AG04450 (cell line): ENCODE measurements at regions of chr12 and their contacts with region 1.

Region 1: GRCh38 chr12:93419388-93420034 is 22.2 kb downstream of the UBE2N start:
- DNase-seq: no peak
- H3K4me3 ChIP-seq: no peak overlapping the region
- H3K27ac ChIP-seq: no peak overlapping the region
- H3K27me3 ChIP-seq: no peaks in the 10 kb centered on the region
- CTCF ChIP-seq: peak; percentile 61

Region 2: DNA sequence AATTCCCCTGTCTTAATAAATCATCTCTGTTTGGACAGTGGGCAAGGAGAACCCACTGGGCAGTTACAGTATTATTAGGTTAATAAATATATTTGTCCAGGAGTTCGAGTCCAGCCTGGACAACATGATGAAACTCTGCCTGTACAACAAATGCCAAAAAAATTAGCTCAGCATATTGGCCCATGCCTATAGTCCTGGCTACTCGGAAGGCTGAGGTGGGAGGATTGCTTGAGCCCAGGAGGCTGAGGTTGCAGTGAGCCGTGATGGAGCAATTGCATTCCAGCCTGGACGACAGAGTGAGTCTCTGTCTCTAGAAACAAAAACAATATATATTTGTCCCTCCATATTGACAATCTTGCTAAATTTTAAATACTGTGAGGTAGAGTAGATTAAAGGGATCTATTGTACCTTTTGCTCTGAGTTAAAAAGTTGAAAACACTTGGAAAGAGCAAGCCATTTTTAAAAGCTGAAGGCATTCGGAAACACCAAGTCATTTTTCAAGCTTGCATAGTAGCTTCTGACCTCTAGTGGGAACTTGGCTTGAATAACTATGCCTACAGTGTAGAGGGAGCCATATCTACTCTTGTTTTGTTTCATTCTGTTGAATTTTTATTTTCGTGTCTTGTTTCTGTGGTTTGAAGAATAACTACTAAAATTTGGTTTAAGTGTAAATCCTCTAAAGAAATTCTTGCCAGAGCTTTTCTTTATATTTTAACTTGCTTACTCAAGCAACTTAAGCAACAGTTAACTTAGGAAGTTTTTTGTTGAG is 475.8 kb before region 1 on chr12:
- CTCF ChIA-PET with region 1: interaction called, 10 read pairs
- POLR2A ChIA-PET with region 1: no interaction called
- DNase-seq: no peak
- H3K4me3 ChIP-seq: no peak overlapping the region
- H3K27ac ChIP-seq: no peak overlapping the region
- H3K27me3 ChIP-seq: no peaks in the 10 kb centered on the region
- CTCF ChIP-seq: no peak; the same call in 1 of the 2 replicates

Region 3: DNA sequence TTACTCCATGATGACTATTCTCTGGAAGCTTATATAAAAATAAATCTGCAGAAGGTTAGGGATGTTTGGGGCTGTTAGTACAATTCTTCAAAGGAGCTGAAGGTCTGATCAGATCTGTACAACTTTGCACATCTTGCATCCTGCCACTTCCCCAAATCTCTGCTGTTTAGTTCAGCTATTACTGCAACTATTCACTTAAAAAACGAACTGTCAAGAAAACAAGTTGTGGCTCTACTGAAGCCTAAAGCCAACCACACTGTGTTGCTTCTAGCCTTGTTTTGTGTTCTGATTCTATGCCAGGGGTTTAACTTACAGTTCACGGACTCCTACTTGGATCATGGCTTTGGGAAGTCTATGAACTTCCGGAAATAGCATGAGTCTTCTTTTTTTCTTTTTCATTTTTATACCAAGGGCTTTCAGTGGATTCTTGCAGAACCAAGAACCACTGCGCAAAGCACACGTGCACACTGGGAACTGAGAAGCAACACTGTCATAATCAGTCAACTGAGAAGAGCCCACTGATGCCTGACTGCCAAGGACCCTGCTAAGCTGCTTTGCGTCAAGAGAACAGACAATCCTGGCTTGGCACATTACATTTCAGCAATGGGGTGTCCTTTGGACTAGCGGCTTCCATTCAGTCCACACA is 424.1 kb before region 1 on chr12:
- CTCF ChIA-PET with region 1: interaction called, 131 read pairs
- POLR2A ChIA-PET with region 1: no interaction called
- DNase-seq: no peak
- H3K4me3 ChIP-seq: no peak overlapping the region
- H3K27ac ChIP-seq: no peak overlapping the region
- H3K27me3 ChIP-seq: no peaks in the 10 kb centered on the region
- CTCF ChIP-seq: no peak

Region 4: DNA sequence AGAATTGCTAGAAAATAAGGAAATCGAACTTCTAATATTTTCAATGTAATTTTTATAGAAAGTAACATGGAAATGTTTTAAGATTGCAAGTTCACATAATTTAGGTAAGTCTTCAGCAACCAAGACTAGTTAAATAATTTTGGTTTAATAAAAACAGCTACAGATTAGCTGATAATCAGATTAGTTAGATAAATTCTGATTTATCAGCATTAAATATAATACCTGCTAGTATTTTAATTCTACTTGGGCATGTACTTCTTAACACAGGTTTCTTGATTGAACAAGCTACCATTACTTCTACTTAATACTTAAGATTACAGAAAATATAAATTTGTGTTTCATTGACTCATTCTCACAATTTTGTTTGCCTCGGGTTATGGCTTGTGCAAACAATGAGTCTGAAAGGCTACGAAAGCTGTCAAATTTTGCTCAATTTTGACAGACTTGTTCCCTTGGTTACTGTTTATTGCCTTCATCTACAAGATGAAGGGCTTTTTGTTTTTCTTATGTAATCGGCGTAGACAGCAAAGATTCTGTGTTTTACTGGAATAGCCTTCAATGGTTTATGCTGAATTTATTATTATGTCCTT is 157.9 kb before region 1 on chr12:
- CTCF ChIA-PET with region 1: no interaction called
- POLR2A ChIA-PET with region 1: no interaction called
- DNase-seq: no peak
- H3K4me3 ChIP-seq: no peak overlapping the region
- H3K27ac ChIP-seq: no peak overlapping the region
- H3K27me3 ChIP-seq: no peaks in the 10 kb centered on the region
- CTCF ChIP-seq: no peak

Region 5: DNA sequence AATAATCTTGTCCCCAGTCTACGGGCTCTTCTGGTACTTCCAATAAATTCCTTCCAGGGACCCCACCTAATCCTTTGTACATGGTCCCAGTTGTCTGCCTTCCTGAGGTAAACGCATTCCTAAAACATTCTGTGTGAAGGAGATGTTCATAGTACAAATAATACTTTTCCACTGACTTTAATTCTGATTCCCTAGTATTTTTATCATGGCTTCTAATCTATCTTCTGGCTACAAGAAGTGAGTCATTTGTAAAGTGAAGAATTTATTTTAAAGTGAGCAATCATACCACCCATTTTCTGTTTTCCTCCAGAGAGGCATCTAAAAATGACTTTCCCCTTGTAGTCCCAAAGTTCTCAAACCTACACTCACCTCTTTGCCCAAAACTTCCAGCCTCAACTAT is 107.7 kb before region 1 on chr12:
- CTCF ChIA-PET with region 1: no interaction called
- POLR2A ChIA-PET with region 1: no interaction called
- DNase-seq: no peak
- H3K4me3 ChIP-seq: no peak overlapping the region
- H3K27ac ChIP-seq: no peak overlapping the region
- H3K27me3 ChIP-seq: no peaks in the 10 kb centered on the region
- CTCF ChIP-seq: no peak

Region 6: DNA sequence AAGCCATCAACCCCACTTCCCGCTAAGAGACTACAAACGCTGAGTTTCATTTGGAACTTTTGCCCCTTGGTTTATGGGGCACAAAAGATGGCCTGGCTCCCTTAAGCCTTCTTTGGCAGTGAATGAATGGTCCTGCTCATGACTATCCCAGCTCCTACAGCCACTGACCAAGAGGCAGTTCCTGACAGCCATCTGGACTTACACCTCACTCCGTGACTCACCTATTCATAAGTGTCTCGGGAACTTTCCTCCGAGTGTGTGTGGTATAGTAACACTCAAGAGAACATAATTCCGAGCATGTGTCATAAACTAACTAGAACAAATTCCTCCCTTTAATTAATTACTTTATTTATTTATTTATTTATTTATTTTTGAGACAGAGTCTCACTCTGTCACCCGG is 93.7 kb before region 1 on chr12:
- CTCF ChIA-PET with region 1: no interaction called
- POLR2A ChIA-PET with region 1: no interaction called
- DNase-seq: no peak
- H3K4me3 ChIP-seq: no peak overlapping the region
- H3K27ac ChIP-seq: no peak overlapping the region
- H3K27me3 ChIP-seq: no peaks in the 10 kb centered on the region
- CTCF ChIP-seq: no peak

Region 7: GRCh38 chr12:93397412-93397811 is 22.1 kb before region 1 on chr12:
- CTCF ChIA-PET with region 1: interaction called, 25 read pairs
- POLR2A ChIA-PET with region 1: no interaction called
- DNase-seq: no peak
- H3K4me3 ChIP-seq: no peak overlapping the region
- H3K27ac ChIP-seq: no peak overlapping the region
- H3K27me3 ChIP-seq: no peaks in the 10 kb centered on the region
- CTCF ChIP-seq: no peak

Region 8: DNA sequence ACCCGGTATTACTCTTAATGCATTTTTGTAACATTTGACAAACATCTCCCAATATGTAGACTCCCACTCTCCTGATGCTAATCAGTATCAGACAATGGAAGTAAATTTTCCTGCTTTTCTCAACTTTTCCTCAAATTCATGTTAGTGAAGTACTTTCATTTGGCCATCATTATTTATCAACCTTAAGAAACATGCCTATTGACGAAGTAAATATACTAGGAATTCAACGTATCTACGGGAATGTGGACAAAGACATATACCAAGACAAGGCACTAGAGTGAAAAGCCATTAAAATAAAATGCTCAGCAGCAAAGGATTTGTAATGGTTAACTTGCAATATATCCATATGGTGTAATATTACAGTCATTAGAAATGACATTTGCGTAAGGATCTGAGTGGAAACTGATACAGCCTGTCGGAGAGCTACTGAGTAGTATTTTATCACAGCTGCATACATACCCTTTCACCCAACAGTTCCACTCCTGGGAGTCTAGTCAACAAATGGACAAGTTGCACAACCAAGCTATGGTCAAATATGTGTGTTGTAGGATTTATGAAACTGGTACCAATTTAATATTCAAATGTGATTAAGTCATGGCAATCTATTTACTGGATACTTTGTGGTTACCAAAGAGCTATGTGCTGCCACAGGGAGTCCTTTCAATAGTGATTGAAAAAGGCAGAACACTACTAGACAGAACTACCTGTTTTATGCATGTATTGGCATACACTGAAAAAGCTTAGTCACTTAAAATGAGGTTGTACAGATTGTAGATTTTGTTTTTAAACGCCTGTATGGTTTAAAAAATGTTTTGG is 15.3 kb before region 1 on chr12:
- CTCF ChIA-PET with region 1: interaction called, 25 read pairs
- POLR2A ChIA-PET with region 1: no interaction called
- DNase-seq: no peak
- H3K4me3 ChIP-seq: no peak overlapping the region
- H3K27ac ChIP-seq: no peak overlapping the region
- H3K27me3 ChIP-seq: no peaks in the 10 kb centered on the region
- CTCF ChIP-seq: no peak

Region 9: GRCh38 chr12:93434256-93434865 is 14.8 kb after region 1 on chr12:
- CTCF ChIA-PET with region 1: interaction called, 32 read pairs
- POLR2A ChIA-PET with region 1: no interaction called
- DNase-seq: no peak
- H3K4me3 ChIP-seq: no peak overlapping the region
- H3K27ac ChIP-seq: no peak overlapping the region
- H3K27me3 ChIP-seq: no peaks in the 10 kb centered on the region
- CTCF ChIP-seq: no peak